ENCODE measurements at regions of chr1 and their contacts with region 1.

Region 1: DNA sequence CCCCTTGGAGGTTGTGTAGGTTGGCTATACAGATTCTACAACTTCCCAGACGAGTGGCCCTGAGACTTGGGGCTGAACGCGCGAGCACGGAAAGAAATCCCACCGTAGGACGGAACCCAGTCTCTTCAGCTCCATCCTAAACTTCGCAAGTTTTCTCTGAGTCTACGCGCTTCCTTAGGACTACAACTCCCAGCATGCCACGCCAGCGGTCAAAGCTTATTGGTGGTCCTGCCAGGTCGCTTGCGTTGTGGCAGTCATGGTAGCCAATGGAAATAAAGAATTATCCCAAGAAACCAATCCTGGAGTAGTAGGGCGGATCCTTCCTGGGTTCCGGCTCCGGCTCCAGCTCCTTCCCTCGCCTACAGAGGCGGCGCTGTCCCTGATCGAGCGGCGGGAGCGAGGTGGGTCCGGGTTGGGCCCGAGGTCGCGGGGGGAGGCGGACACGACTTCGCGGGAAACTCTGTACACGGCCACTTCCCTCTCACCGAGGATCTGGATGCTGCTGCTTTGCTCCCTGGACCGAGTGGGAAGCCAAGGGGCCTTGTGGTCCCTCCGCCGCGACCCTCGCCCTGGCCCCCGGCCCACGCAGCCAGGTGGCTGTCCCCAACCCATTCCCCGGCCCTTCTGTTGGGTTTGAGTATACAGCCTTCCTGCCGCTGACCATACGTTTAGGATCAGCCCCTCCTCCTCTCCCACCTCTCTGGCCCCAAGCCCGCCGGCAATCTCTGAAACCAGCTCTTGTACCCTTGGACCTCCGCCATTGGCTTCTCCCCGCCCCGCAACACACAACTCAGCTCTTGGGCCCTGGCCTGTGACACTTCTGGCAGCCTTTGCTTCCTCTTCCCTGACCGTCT is at the start of gene ZNF691:
- DNase-seq: peak; percentile 99
- H3K4me3 ChIP-seq: peak within 1 kb of the TSS; percentile 61 to 84 (median 75)
- H3K27ac ChIP-seq: no peak within 1 kb of the TSS
- H3K4me1 ChIP-seq: peaks cover 12% of the 10 kb centered on the region
- H3K27me3 ChIP-seq: no peaks in the 10 kb centered on the region
- CTCF ChIP-seq: peak in 1 of 2 donors; percentile 44
- POLR2A ChIP-seq: peak; percentile 78
- total RNA-seq, gene ZNF691: 6.6 and 7.4 TPM in 2 replicates

Region 2: GRCh38 chr1:42777852-42778251 is 68.6 kb before region 1 on chr1:
- CTCF ChIA-PET with region 1: interaction called, 21 read pairs
- POLR2A ChIA-PET with region 1: no interaction called
- dilution Hi-C with region 1: no loop called
- intact Hi-C with region 1: no loop called
- DNase-seq: peak; percentile 54
- H3K4me3 ChIP-seq: no peak overlapping the region
- H3K27ac ChIP-seq: no peak overlapping the region
- H3K4me1 ChIP-seq: no peaks in the 10 kb centered on the region
- H3K27me3 ChIP-seq: no peaks in the 10 kb centered on the region
- CTCF ChIP-seq: peak; percentile 59 to 67
- POLR2A ChIP-seq: no peak

Region 3: DNA sequence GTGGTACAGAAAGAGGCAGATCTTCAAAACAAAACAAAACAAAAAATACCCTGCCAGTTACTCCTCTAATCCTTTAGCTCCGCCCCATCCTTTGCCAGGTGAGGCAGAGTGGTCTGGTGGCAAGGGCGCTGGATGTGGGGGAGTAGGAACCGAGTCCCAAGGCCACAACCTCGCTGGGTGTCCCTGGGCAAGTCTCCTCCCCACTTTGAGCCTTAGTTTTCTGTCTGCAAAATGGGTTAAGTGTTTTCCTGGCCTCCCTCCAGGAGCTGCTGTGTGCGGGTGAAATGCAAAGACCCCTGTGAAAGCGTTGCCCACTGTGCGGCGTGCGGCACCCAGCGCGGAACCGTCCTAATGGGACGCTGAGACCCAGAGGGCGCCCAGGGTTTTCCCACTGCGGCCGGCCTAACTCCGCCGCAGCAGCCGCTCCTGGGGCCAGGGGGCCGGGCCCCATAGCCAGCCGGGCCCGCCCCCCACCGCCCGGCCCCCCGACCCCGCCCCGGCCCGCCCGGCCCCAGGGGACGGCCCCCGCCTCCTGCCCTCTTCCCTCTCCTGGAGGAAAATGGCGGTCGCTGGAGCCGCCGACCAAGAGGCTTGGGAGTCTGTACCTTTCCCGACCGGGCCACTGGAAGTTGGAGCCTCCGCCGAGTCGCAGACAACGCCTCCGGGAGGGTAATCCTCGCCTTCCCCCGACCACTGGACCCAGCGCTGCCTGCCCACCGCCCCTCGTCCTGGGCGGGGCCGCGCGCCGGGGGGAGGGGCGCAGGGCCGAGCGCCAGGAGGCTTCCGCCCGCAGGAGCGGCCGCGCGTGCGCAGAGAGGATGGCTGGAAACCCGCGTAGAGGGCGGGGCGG is 29.7 kb before region 1 on chr1 and contains the starts of genes ERMAP and SVBP:
- CTCF ChIA-PET with region 1: interaction called, 16 read pairs
- POLR2A ChIA-PET with region 1: interaction called, 6 read pairs
- dilution Hi-C with region 1: no loop called
- intact Hi-C with region 1: loop called (anchors 2 kb)
- DNase-seq: peak; percentile 89
- H3K4me3 ChIP-seq: peak within 1 kb of the TSS; percentile 73 to 87 (median 74)
- H3K27ac ChIP-seq: peak within 1 kb of the TSS; percentile 91
- H3K4me1 ChIP-seq: peaks cover 18% of the 10 kb centered on the region
- H3K27me3 ChIP-seq: no peaks in the 10 kb centered on the region
- CTCF ChIP-seq: no peak
- POLR2A ChIP-seq: peak; percentile 89
- total RNA-seq, gene ERMAP: 7.8 and 7.9 TPM in 2 replicates
- total RNA-seq, gene SVBP: 24.1 and 24.7 TPM in 2 replicates

Region 4: DNA sequence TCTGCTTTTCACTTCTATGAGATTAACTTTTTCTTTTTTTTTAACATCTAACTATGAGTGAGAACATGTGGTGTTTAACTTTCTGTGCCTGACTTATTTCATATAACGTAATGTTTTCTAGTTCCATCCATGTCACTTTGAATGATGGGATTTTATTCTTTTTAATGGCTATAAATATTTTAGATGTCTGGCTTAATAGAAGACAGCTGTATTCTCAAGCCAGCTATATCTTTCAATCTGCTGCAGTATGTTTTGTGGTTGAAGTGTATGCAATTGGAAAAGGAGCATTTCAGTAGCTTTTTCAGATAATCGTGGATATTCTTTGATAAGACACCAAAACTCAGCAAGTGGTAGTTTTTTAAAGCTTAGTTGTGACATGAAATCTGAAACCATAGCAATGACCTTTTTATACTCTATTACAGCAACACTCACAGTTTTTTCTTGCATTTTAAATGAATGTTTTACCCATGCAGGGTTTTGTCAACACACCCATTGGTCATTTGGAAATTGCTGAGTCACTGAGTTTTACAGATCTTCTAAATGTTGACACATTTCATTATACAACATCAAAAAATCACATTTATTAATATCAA is 23.6 kb before region 1 on chr1:
- CTCF ChIA-PET with region 1: interaction called, 16 read pairs
- POLR2A ChIA-PET with region 1: no interaction called
- dilution Hi-C with region 1: no loop called
- intact Hi-C with region 1: no loop called
- DNase-seq: no peak
- H3K4me3 ChIP-seq: no peak overlapping the region
- H3K27ac ChIP-seq: no peak overlapping the region
- H3K4me1 ChIP-seq: peaks cover under 1% of the 10 kb centered on the region
- H3K27me3 ChIP-seq: no peaks in the 10 kb centered on the region
- CTCF ChIP-seq: no peak
- POLR2A ChIP-seq: no peak

Region 5: GRCh38 chr1:42981871-42982270 is 135.4 kb after region 1 on chr1:
- CTCF ChIA-PET with region 1: no interaction called
- POLR2A ChIA-PET with region 1: no interaction called
- dilution Hi-C with region 1: no loop called
- intact Hi-C with region 1: no loop called
- DNase-seq: no peak
- H3K4me3 ChIP-seq: no peak overlapping the region
- H3K27ac ChIP-seq: no peak overlapping the region
- H3K4me1 ChIP-seq: peaks cover 12% of the 10 kb centered on the region
- H3K27me3 ChIP-seq: no peaks in the 10 kb centered on the region
- CTCF ChIP-seq: no peak
- POLR2A ChIP-seq: no peak